ENCODE measurements at regions of chr10 and their contacts with region 1.

Region 1: DNA sequence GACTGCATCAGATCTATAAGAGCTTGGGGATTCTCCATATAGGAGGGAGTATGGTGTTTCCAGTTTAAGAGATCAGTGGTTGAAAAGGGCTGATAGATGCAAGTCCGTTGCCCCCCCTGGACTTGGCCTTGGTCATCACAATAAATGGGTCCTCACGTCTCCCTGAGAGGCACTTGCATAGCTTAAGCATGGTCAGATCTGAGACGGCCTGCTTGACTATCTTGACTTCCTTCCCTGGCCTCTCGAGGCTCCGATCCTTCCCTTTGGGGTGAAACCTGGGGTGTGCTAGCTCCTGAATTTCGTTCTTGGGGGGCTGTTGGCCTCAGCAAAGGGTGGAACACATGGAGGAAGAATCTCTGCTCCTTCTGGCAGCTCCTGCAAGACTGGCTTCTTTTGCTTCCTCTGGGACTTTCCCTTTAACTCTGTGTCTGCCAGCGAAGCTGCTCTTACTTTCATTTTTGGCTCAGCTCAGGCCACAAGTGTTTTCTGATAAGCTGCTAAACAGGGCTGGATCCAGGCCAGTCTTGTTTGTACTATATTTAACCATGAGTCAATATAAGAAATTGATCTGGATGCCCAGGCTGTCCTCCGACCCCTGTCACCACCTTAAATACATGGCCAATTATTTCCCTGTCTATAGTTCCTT is 11.2 kb upstream of the ZNF485 start:
- DNase-seq: no peak
- H3K4me3 ChIP-seq: peak overlapping the region in 1 of 2 donors; percentile 27
- H3K27ac ChIP-seq: peak overlapping the region in 1 of 2 donors; percentile 49
- H3K4me1 ChIP-seq: no peaks in the 10 kb centered on the region
- H3K27me3 ChIP-seq: no peaks in the 10 kb centered on the region
- CTCF ChIP-seq: no peak
- POLR2A ChIP-seq: no peak

Region 2: DNA sequence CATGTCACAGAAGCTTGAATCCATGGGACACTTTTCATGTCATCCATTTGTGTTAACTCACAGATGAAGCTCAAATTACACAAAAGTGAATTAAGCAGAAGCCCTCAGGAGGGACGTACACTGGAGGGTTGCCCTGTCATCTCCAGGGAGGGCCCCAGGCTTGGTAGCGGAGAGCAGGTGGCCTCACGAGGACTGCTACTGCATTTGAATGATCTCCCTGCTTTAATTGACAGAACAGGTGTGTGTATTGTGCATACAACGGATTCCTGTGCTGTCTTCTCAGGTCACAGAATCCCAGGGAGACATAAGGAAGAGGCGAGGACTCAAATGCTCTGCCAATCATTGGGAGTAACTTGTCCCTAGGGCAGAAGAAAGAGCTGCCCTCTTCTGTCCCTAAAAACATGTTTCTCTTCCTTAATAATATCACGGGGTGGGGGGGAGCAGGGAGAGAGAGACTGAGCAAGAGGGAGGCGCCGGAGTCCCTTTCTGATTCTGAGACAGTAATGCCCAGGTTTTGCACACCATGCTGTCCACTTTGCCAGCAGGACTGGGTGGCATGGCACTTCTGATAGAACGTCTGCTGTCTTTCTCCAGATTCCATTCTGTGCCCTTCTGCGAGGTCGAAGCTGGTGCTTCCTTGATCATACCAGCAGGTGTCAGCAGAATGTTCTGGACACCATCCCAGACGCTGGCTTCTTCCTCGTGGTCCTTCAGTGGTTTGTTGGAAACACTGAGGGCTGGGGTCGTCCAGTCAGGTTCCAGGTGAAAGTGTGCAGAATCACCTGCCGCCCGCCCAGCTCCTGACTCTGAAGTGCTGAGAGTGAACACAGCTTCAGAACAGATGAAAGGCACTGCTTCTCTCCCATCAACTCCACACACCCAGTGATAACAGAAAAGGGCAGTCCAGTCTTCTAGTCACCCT is 302.1 kb before region 1 on chr10:
- intact Hi-C with region 1: loop called (anchors 10 kb)
- DNase-seq: peak; percentile 46 to 51
- H3K4me3 ChIP-seq: no peak overlapping the region
- H3K27ac ChIP-seq: no peak overlapping the region
- H3K4me1 ChIP-seq: no peaks in the 10 kb centered on the region
- H3K27me3 ChIP-seq: no peaks in the 10 kb centered on the region
- CTCF ChIP-seq: peak; percentile 63 to 76 (median 71)
- POLR2A ChIP-seq: no peak

Region 3: GRCh38 chr10:43698156-43698555 is 103.1 kb after region 1 on chr10:
- intact Hi-C with region 1: no loop called
- DNase-seq: no peak
- H3K4me3 ChIP-seq: no peak overlapping the region
- H3K27ac ChIP-seq: no peak overlapping the region
- H3K4me1 ChIP-seq: no peaks in the 10 kb centered on the region
- H3K27me3 ChIP-seq: no peaks in the 10 kb centered on the region
- CTCF ChIP-seq: no peak
- POLR2A ChIP-seq: no peak